Activated CD8-positive, alpha-beta T cell treated with anti-CD3 and anti-CD28 coated beads, Interleukin-2, amount 10 ng/mL, durations not matched to agents 7 days and 5 days (primary cell): ENCODE measurements at regions of chr20 and their contacts with region 1.

Region 1: GRCh38 chr20:59850018-59850641 is 83.3 kb downstream of the SYCP2 start:
- DNase-seq: no peak
- ATAC-seq: no peak
- H3K4me3 Mint-ChIP-seq: no peak overlapping the region
- H3K27ac Mint-ChIP-seq: no peak overlapping the region
- H3K4me1 Mint-ChIP-seq: no peaks in the 10 kb centered on the region
- H3K27me3 Mint-ChIP-seq: peaks cover 5% of the 10 kb centered on the region

Region 2: GRCh38 chr20:59761153-59761552 is 89.0 kb before region 1 on chr20:
- CTCF ChIA-PET with region 1: no interaction called
- POLR2A ChIA-PET with region 1: no interaction called
- DNase-seq: no peak
- ATAC-seq: no peak
- H3K4me3 Mint-ChIP-seq: no peak overlapping the region
- H3K27ac Mint-ChIP-seq: no peak overlapping the region
- H3K4me1 Mint-ChIP-seq: no peaks in the 10 kb centered on the region
- H3K27me3 Mint-ChIP-seq: no peaks in the 10 kb centered on the region

Region 3: GRCh38 chr20:59781226-59781625 is 68.9 kb before region 1 on chr20:
- CTCF ChIA-PET with region 1: interaction called, 11 read pairs
- POLR2A ChIA-PET with region 1: no interaction called
- DNase-seq: no peak
- ATAC-seq: no peak
- H3K4me3 Mint-ChIP-seq: no peak overlapping the region
- H3K27ac Mint-ChIP-seq: no peak overlapping the region
- H3K4me1 Mint-ChIP-seq: no peaks in the 10 kb centered on the region
- H3K27me3 Mint-ChIP-seq: no peaks in the 10 kb centered on the region

Region 4: DNA sequence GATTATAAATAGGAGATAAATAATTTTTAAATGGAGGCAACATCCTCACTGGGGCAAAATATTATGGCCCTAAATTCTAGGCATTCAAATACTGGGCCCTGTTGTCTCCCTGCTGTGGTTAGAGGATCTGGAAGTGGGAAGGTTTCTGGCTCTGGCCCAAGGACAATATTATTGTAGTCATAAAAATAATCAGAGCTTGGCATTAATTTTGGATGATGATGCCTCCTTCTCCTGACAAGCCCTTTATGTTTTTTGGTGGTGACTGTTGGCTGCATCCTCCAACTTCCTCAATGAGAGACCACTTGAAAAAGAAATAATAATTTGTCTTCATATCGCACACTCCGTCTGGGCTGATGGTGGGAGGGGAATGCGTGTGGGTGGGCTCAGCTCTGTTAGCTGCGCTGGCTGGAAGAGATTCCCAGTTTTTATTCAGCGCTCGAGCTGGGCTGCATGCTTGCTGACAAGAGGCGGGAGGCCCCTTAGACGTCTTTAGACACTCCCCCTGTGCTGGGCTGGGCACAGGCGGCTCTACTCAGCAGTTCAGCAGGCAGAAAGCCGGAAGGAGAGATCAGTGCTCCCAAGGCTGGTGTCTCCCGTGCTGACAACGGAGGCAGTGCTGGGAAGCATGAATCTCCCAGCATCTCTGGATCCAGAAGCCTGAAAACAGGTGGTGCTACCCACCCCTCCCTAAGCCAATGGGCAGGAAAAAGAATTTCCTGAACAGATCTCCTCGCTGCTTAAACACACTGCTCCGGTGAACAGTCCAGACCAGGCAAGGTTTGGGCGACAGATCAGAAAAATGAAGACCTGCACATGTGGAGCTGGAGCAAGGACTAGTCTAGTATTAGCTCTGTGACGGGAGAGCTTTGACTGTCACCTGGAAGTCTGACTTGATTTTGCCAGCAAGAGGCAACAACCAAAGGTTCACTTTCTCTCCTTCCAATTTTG is 14.4 kb before region 1 on chr20:
- CTCF ChIA-PET with region 1: interaction called, 22 read pairs
- POLR2A ChIA-PET with region 1: no interaction called
- DNase-seq: no peak
- ATAC-seq: no peak
- H3K4me3 Mint-ChIP-seq: no peak overlapping the region
- H3K27ac Mint-ChIP-seq: no peak overlapping the region
- H3K4me1 Mint-ChIP-seq: no peaks in the 10 kb centered on the region
- H3K27me3 Mint-ChIP-seq: peaks cover 11% of the 10 kb centered on the region